ENCODE measurements at regions of chr15 and their contacts with region 1.

Region 1: DNA sequence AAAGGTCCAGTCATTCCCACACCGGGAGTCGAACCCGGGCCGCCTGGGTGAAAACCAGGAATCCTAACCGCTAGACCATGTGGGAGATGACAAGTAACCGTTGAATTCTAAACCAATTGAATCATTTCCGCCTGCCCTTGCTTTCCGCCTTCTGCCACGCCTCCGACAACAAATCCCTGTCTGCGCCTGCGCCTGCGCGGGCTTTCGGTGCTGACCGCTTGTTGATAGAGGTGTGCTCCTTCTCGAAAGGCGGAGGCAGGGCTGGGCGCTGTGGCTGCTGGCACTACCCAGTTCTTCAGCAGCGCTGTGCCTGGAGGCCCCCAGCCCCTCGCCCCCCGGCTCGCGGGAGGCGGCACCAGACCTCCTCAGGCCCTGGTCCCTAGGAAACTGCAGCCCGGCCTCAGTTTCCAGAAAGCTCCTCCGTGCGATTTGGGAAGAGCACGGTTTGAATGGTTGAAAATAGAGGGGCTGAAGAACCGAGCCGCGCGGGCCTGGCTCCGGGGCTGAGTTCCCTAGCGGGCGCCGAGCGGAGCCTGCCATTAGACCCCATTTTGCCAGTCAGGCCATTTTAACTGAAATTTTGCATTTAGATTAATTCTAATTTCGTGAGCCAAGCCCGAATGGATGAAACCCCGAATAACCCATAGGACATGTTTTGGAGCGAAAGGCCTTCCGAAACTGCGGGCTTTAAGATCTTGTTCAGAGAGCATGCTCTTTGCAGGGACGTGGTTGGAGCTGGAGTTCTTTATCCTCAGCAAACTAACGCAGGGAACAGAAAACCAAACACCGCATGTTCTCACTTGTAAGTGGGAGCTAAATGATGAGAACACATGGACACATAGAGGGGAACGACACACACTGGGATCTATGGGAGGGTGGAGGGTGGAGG is 219.3 kb upstream of the ATP10A start:
- DNase-seq: peak; percentile 89 to 98 (median 95)
- ATAC-seq: peak; percentile 95
- H3K4me3 ChIP-seq: peak overlapping the region; percentile 67
- H3K4me3 Mint-ChIP-seq: peak overlapping the region; percentile 89
- H3K27ac ChIP-seq: peak overlapping the region; percentile 56 to 57
- H3K27ac Mint-ChIP-seq: peak overlapping the region; percentile 98
- H3K4me1 ChIP-seq: peaks cover 16% of the 10 kb centered on the region
- H3K4me1 Mint-ChIP-seq: peaks cover 57% of the 10 kb centered on the region
- H3K27me3 ChIP-seq: no peaks in the 10 kb centered on the region
- H3K27me3 Mint-ChIP-seq: peaks cover 14% of the 10 kb centered on the region
- CTCF ChIP-seq: no peak

Region 2: DNA sequence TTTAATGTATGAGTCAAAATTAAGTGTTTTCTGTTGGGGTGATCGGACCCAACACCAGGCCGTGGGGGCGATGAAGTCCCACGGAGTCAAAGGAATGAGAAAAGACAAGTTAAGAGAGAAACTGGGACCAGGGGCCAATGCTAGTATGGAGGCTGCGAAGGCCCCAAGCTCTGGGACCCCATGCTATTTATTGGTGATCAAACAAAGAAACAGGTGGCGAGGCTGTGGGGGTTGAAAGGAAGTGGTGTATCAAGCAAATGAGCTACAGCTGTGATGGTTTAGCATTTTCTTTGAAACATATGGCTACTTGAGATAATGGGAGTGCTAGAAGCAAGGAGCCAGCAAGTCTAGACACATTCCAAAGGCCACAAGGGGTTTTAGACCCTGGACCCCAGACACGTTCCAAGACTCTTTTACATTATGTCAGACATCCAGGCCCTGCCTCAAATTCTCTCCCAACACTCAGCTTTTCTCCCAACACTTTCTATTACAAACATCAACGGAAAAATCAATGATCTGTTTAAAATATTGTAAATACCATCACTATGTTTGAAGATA is 1183.7 kb before region 1 on chr15:
- CTCF ChIA-PET with region 1: no interaction called
- POLR2A ChIA-PET with region 1: no interaction called
- intact Hi-C with region 1: no loop called
- DNase-seq: no peak
- ATAC-seq: no peak
- H3K4me3 ChIP-seq: no peak overlapping the region
- H3K4me3 Mint-ChIP-seq: no peak overlapping the region
- H3K27ac ChIP-seq: no peak overlapping the region
- H3K27ac Mint-ChIP-seq: no peak overlapping the region
- H3K4me1 ChIP-seq: no peaks in the 10 kb centered on the region
- H3K4me1 Mint-ChIP-seq: no peaks in the 10 kb centered on the region
- H3K27me3 ChIP-seq: no peaks in the 10 kb centered on the region
- H3K27me3 Mint-ChIP-seq: no peaks in the 10 kb centered on the region
- CTCF ChIP-seq: no peak

Region 3: GRCh38 chr15:25438601-25439368 is 643.7 kb before region 1 on chr15 and contains the start of gene UBE3A:
- CTCF ChIA-PET with region 1: no interaction called
- POLR2A ChIA-PET with region 1: no interaction called
- intact Hi-C with region 1: loop called (anchors 5 kb)
- DNase-seq: peak; percentile 70 to 96 (median 84)
- ATAC-seq: peak; percentile 90
- H3K4me3 ChIP-seq: peak within 1 kb of the TSS; percentile 82
- H3K4me3 Mint-ChIP-seq: peak within 1 kb of the TSS; percentile 99
- H3K27ac ChIP-seq: peak within 1 kb of the TSS; percentile 67 to 92
- H3K27ac Mint-ChIP-seq: peak within 1 kb of the TSS; percentile 95
- H3K4me1 ChIP-seq: peaks cover 13% of the 10 kb centered on the region
- H3K4me1 Mint-ChIP-seq: peaks cover 48% of the 10 kb centered on the region
- H3K27me3 ChIP-seq: no peaks in the 10 kb centered on the region
- H3K27me3 Mint-ChIP-seq: no peaks in the 10 kb centered on the region
- CTCF ChIP-seq: no peak
- total RNA-seq, gene UBE3A: 124 to 126 TPM

Measured in CD4-positive, alpha-beta T cell (primary cell).